ENCODE measurements at regions of chr6 and their contacts with region 1.

Region 1: GRCh38 chr6:121334299-121335086 is at the start of gene TBC1D32:
- DNase-seq: peak; percentile 93
- ATAC-seq: peak; percentile 92
- H3K4me3 Mint-ChIP-seq: peak within 1 kb of the TSS; percentile 94
- H3K27ac Mint-ChIP-seq: peak within 1 kb of the TSS; percentile 98
- H3K4me1 Mint-ChIP-seq: peaks cover 33% of the 10 kb centered on the region
- H3K27me3 Mint-ChIP-seq: no peaks in the 10 kb centered on the region
- total RNA-seq, gene TBC1D32: 9.2 to 9.9 TPM

Region 2: DNA sequence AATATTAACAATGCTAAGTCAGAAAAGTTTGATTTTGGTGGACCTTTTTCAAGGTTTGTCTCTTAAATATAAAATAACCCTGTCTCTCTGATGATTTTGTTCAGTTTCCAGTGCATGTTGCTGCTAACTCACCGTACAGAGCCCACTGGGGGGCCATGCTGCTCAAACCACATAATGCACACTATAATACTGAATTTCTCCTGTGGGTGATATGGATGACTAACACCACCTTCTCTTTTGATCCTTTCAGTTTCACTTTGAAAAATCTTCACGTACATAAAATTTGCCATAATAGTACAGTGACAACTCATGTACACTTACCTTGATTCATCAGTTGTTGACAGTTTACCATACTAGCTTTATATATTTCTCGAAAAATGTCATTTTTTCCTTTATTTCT is 1478.4 kb before region 1 on chr6:
- CTCF ChIA-PET with region 1: no interaction called
- POLR2A ChIA-PET with region 1: no interaction called
- intact Hi-C with region 1: loop called in 1 of 2 experiments (anchors 10 kb)
- DNase-seq: peak; percentile 41
- ATAC-seq: peak; percentile 96
- H3K4me3 Mint-ChIP-seq: no peak overlapping the region
- H3K27ac Mint-ChIP-seq: no peak overlapping the region
- H3K4me1 Mint-ChIP-seq: peaks cover 14% of the 10 kb centered on the region
- H3K27me3 Mint-ChIP-seq: no peaks in the 10 kb centered on the region

Region 3: DNA sequence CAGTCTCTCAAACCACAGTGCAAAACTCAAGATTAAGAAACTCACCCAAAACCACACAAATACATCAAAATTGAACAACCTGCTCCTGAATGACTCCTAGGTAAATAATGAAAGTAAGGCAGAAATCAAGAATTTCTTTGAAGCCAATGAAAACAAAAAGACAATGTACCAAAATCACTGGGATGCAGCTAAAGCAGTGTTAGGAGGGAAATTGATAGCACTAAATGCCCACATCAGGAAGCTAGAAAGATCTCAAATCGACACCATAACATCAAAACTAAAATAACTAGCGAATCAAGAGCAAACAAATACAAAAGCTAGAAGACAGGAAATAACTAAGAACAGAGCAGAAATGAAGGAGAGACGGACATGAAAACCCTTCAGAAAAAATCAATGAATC is 70.8 kb before region 1 on chr6:
- CTCF ChIA-PET with region 1: no interaction called
- POLR2A ChIA-PET with region 1: no interaction called
- intact Hi-C with region 1: no loop called
- DNase-seq: no peak
- ATAC-seq: no peak
- H3K4me3 Mint-ChIP-seq: no peak overlapping the region
- H3K27ac Mint-ChIP-seq: no peak overlapping the region
- H3K4me1 Mint-ChIP-seq: no peaks in the 10 kb centered on the region
- H3K27me3 Mint-ChIP-seq: no peaks in the 10 kb centered on the region

Region 4: GRCh38 chr6:121321282-121321681 is 13.2 kb before region 1 on chr6:
- CTCF ChIA-PET with region 1: interaction called, 9 read pairs
- POLR2A ChIA-PET with region 1: no interaction called
- intact Hi-C with region 1: loop called (anchors 1 kb)
- DNase-seq: peak; percentile 27
- ATAC-seq: peak; percentile 95
- H3K4me3 Mint-ChIP-seq: no peak overlapping the region
- H3K27ac Mint-ChIP-seq: peak overlapping the region; percentile 20
- H3K4me1 Mint-ChIP-seq: peaks cover 19% of the 10 kb centered on the region
- H3K27me3 Mint-ChIP-seq: no peaks in the 10 kb centered on the region

Region 5: GRCh38 chr6:121365536-121366521 is 31.3 kb after region 1 on chr6:
- CTCF ChIA-PET with region 1: no interaction called
- POLR2A ChIA-PET with region 1: no interaction called
- intact Hi-C with region 1: no loop called
- DNase-seq: no peak
- ATAC-seq: no peak
- H3K4me3 Mint-ChIP-seq: no peak overlapping the region
- H3K27ac Mint-ChIP-seq: no peak overlapping the region
- H3K4me1 Mint-ChIP-seq: no peaks in the 10 kb centered on the region
- H3K27me3 Mint-ChIP-seq: peaks cover 14% of the 10 kb centered on the region

Measured in activated CD4-positive, alpha-beta T cell treated with anti-CD3 and anti-CD28 coated beads for 36 hours (primary cell).